Sciatic nerve (tissue), 2 donors: ENCODE measurements at regions of chr5 and their contacts with region 1.

Region 1: DNA sequence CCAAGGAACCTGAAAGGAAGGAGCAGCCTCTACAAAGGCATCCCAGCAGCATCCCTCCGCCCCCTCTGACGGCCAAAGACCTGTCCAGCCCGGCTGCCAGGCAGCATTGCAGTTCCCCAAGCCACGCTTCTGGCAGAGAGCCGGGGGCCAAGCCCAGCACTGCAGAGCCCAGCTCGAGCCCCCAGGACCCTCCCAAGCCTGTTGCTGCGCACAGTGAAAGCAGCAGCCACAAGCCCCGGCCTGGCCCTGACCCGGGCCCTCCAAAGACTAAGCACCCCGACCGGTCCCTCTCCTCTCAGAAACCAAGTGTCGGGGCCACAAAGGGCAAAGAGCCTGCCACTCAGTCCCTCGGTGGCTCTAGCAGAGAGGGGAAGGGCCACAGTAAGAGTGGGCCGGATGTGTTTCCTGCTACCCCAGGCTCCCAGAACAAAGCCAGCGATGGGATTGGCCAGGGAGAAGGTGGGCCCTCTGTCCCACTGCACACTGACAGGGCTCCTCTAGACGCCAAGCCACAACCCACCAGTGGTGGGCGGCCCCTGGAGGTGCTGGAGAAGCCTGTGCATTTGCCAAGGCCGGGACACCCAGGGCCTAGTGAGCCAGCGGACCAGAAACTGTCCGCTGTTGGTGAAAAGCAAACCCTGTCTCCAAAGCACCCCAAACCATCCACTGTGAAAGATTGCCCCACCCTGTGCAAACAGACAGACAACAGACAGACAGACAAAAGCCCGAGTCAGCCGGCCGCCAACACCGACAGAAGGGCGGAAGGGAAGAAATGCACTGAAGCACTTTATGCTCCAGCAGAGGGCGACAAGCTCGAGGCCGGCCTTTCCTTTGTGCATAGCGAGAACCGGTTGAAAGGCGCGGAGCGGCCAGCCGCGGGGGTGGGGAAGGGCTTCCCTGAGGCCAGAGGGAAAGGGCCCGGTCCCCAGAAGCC is 30.8 kb downstream of the CD180 start:
- DNase-seq: peak; percentile 94
- ATAC-seq: peak; percentile 95

Region 2: DNA sequence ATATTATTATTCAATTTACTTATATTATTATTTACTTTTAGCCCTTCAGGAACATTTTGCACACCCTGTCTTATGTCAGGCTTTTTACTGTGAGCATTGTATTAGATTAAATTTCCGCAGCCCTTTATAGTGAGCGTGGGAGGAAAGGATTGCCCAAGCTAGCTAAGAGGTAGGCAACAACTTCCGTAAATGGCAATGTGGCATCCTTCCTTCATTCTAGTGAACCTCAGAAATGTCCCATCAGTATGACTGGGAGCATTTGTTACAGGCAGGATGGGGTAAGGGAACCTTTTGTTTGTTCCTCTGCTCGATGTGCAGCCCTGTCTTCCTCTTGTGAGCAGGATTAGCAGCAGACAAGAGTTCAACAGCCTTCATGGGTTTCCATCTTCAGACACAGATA is 37.0 kb after region 1 on chr5:
- intact Hi-C with region 1: loop called (anchors 5 kb)
- DNase-seq: no peak
- ATAC-seq: peak; percentile 15

Region 3: DNA sequence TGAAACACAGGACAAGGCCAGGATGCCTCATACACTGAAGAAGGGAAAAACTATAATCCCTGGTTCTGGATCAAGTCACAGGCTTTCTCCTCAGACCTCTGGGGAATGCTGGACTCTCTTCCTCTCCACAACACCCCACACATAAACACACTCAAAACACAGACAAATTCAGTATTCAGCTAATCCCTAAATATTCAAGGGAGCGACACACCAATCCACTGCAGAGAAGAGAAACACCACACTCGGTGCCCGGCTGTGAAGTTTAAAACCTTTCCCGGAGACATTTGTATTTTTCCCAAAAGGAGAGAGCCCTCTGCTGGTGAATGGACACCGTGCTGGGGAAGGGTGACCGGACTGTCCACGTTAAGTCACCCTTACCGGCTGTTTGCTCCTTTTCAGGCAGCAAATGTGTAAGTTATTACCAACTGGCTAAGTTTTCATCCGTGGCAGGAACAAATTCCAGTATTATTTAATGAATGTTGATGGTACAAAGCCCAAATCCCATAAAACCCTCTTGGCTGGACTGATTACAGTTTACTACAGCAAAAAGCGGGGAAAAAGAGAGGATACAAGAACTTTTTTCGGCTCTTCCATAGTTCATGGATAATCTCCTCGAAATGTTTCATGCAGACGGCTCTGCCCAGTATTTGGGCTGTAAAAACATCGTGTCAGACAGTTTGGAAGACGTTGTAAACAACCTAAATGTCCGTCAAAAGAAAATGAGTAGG is 1797.1 kb after region 1 on chr5:
- intact Hi-C with region 1: loop called (anchors 2 kb)
- DNase-seq: peak; percentile 83
- ATAC-seq: peak; percentile 94